Head of caudate nucleus (tissue), 42 donors: ENCODE measurements at regions of chr2 and their contacts with region 1.

Region 1: GRCh38 chr2:234951664-234952269 is at the start of gene SH3BP4:
- DNase-seq: peak; percentile 55 to 95 (median 89)

Region 2: DNA sequence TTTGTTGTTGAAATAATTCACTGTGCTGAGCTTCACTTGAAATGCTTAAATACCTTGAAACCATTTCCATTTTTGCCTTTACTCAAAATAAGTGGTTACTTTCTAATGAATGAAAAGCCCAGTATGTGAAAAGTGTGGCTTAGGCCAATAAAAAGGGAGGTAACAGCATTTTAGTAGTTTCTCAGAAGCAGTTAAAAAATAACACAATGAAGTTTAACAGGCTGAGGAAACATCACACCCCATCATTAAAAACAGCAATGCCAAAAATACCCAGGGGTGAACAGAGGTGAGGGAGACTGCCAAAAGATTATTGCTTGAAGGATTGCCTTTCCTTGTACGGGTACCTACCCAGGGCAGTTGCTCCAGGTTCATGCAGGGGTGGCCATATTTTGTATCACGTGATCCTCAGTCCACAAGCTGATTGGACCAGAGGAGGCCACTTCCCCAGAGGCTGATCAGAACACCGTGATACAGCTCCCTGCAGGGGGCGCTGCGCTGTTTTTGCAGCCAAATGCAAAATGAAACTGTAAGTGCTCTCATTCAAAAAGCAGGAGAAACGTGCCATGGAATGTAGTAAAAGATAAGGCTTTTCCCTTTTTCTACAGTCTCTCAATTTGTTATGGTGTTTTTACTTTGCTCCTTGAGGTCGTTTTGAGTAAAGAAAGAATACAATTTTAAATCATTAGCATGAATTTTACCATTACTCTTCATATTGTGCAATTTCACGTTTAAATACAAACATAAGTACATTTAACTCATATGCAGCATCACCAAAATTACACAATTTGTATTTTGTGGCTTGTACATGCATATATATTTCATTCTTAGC is 70.1 kb before region 1 on chr2:
- intact Hi-C with region 1: loop called (anchors 5 kb)
- DNase-seq: peak; percentile 60 to 98 (median 91)

Region 3: DNA sequence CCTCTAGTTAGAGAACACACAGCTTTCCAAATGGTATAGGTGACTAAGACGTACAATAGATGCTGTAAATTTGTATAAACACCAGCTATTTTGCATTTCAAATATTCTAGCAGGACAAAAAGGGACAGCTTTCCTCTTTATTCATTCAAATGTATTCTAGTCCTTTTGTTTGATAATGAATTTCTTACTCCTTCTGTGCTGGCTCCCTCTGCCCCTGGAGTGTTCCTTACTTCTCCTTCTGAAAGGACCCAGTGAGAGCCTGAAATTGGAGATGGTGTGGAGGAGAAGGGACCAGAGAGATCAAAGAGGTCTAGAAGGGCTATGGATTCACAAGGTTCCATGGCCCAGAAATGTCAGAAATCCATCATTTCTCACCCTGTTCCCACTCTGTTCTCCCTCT is 53.1 kb before region 1 on chr2:
- intact Hi-C with region 1: no loop called
- DNase-seq: no peak

Region 4: DNA sequence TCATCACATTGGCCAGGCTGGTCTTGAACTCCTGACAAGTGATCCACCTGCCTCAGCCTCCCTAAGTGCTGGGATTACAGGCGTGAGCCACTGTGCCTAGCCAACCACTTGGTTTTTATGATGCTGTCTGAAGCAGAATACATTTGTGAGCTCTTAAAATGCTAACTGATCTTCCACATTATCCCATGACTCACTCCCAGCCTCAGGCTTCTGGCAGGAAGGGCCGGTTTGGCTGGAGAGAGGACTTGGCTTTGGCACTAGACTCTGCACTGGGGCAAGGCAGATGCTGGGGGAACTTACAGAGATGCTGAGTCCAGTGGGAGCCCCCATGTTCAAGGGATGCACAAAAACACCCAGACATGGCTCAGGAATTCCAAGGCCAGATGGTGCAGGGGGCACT is 40.5 kb before region 1 on chr2:
- intact Hi-C with region 1: loop called (anchors 5 kb)
- DNase-seq: peak in 10 of 42 donors; percentile 17 to 74 (median 42)

Region 5: DNA sequence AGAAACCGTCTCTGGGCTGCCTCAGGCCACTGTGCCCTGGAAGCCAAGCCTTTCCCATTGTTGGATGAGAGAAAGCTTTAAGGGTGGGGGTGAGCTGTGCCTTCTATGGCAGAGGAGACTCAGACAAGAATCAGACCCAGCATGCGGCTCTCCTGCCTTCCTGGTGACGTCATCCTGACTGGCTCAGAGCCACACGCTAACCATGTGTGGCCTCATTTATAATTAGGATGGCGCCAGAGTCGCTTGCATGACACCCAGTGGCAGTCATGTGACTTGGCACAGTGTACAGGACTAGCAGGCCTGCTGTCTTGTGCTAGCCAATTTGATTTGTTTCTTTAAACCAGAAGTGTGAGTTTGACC is 99.2 kb after region 1 on chr2:
- intact Hi-C with region 1: loop called (anchors 5 kb)
- DNase-seq: peak; percentile 69 to 98 (median 90)

Region 6: DNA sequence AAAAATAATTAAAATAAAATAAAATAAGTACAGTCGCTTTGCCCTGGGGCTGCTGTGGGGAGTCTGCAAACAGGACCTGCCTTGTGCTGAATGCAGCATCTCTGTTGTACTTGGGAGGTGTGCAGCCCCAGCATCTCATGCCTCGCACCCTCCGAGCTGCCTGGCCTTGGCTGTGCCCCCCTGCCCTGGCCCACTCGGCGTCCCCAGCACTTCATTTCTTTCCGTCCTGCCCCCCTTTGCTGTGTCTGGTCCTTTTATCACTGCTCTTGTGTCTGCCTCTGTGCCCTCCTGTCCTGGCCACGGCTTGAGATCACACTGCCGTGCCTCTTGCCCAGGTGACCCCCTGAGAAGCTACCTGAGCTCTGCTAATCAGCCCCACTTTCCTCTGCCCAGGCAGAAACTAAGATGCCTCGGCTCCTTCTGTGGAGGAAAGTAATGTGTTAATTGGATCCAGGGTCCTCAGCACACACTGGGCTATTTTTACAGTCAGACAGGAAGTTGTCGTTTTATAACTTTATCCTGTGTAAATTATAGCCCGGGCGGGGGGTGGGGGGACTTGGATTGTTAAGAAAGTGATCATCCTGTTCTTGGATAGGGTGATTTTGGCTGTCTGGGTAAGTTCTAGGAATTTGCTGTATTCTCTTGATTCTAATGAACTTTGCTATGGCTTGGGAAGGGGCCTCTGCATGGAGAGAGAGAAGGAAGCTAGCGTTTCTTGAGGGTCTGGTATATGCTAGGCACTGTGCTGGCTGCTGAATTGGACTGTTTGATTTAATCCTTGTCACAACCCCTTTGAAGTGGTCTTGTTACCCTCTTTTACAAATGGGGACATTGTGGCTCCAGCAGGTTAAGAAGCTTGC is 611.5 kb after region 1 on chr2:
- intact Hi-C with region 1: no loop called
- DNase-seq: no peak